ENCODE measurements at regions of chr4 and their contacts with region 1.

Region 1: GRCh38 chr4:53365486-53366300 is at the start of gene SCFD2:
- DNase-seq: peak; percentile 93 to 99
- ATAC-seq: peak; percentile 100
- H3K4me3 ChIP-seq: peak within 1 kb of the TSS; percentile 69 to 98 (median 88)
- H3K27ac ChIP-seq: peak within 1 kb of the TSS in 9 of 10 donors; percentile 14 to 79 (median 68)
- H3K4me1 ChIP-seq: peaks cover 0 to 39% (median 29%) of the 10 kb centered on the region in 9 donors
- H3K27me3 ChIP-seq: peaks cover 0 to 24% (median 10%) of the 10 kb centered on the region in 7 donors
- CTCF ChIP-seq: no peak
- total RNA-seq, gene SCFD2: 7.5 to 15.0 (median 10.2) TPM

Region 2: DNA sequence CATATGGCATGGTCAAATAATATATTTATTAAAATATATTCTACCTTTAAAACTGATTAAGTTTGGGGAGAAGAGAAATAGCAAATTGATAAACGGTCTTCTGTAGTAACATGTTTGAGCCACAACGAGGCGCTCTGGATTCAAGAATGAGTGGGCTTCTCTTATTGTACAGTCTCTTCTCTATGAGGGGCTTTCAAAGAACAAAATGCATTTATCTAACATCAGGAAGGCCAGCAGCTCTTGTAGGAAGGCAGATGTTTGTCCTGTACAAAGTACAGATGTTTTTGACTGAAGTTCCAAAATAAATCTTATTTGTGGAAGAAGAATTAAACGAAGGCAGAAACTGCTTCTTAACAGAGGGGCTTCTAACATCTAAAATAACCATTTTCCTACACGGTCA is 350.0 kb before region 1 on chr4:
- intact Hi-C with region 1: loop called in 3 of 10 experiments (anchors 10 kb)
- DNase-seq: peak in 1 of 2 donors; percentile 38
- ATAC-seq: peak in 1 of 8 donors; percentile 29
- H3K4me3 ChIP-seq: no peak overlapping the region
- H3K27ac ChIP-seq: no peak overlapping the region
- H3K4me1 ChIP-seq: peaks cover 6 to 70% (median 55%) of the 10 kb centered on the region in 9 donors
- H3K27me3 ChIP-seq: no peaks in the 10 kb centered on the region
- CTCF ChIP-seq: peak; percentile 35 to 80 (median 66)

Region 3: DNA sequence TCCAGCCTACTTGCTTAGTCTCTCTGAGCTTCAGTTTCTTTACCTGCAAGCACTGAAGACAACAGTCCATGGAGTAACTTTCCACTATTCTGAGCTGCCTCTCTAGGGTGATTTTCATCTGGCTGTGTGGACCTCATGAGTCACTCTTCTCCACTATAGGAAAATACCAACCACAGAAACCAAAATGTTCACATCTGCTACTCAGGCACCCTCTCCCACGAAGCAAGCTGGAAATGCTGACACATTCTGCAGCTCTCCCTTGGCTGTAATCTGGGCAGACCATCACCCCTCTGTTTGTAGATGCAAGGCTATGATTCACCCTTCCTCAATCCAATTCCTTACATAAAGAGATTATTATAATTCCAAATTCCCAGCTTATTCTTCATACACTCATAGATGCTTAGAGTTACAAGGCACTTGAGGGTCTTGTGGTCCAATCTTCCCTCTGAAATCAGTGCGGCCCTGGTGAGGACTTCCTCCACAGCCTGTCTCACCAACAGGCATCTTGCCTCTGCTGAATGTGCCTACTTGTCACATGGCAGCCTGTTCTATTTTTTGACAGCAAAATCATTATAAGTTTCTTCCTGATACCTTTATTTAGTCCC is 322.6 kb after region 1 on chr4:
- intact Hi-C with region 1: no loop called
- DNase-seq: no peak
- ATAC-seq: peak in 2 of 8 donors; percentile 30 to 86
- H3K4me3 ChIP-seq: no peak overlapping the region
- H3K27ac ChIP-seq: peak overlapping the region in 1 of 10 donors; percentile 28
- H3K4me1 ChIP-seq: peaks cover 0 to 9% (median 0%) of the 10 kb centered on the region in 9 donors
- H3K27me3 ChIP-seq: peaks cover 0 to 5% (median 0%) of the 10 kb centered on the region in 7 donors
- CTCF ChIP-seq: no peak

Region 4: DNA sequence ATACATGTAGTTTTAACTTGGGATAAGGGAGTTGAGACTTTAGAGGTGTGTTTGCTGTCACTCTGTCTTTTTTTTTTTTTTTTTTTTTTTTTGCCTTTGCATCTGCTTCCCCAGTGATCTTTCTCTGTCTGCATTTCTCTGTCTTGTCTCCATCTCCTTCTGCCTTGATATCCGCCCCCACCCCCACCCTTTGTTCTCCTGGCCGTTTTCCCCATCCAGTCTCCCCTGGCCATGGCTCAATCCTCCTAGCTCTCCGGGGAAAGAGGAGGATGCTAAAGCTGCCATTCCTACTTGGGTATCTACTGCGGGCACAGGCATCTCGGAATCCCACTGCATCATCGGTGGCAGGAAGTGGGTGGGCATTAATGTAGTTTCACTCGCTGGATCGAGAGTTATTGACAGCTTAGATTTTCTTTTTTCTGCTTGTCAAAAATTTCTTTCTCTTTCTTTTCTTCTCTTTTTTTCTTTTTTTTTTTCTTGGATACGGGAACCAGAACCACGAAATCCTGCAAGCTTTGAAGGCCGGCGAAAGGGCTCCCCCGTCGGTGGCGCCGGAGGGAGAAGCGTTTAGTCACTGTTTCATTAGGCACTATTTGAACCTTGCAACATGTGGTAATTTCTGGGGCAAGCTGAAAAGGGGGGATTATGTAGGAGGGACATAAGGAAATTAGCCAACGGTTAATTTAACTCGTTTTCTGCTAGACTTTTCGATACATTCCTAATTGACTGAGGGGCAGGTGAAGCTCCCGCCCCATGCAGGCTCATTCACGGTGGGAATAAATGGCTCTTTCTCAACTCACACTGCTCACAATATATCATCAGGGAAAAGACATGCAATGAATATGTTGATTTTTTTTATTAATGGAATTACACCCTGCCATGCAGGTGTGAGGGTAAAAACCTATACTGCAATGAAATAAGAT is 742.5 kb after region 1 on chr4:
- intact Hi-C with region 1: no loop called
- DNase-seq: no peak
- ATAC-seq: no peak
- H3K4me3 ChIP-seq: no peak overlapping the region
- H3K27ac ChIP-seq: no peak overlapping the region
- H3K4me1 ChIP-seq: peaks cover 0 to 33% (median 19%) of the 10 kb centered on the region in 9 donors
- H3K27me3 ChIP-seq: peaks cover 10 to 100% (median 97%) of the 10 kb centered on the region in 7 donors
- CTCF ChIP-seq: no peak